Naive thymus-derived CD4-positive, alpha-beta T cell (primary cell): ENCODE measurements at regions of chr20 and their contacts with region 1.

Region 1: GRCh38 chr20:33674295-33675135 is at the start of gene NECAB3:
- DNase-seq: peak in 6 of 9 donors; percentile 27 to 83 (median 39)
- ATAC-seq: peak; percentile 89
- H3K4me3 ChIP-seq: peak within 1 kb of the TSS; percentile 58
- H3K4me3 Mint-ChIP-seq: peak within 1 kb of the TSS; percentile 85 to 95 (median 87)
- H3K27ac ChIP-seq: peak within 1 kb of the TSS; percentile 54
- H3K27ac Mint-ChIP-seq: peak within 1 kb of the TSS; percentile 33 to 90 (median 80)
- H3K4me1 ChIP-seq: peaks cover 15 to 38% of the 10 kb centered on the region in 2 donors
- H3K4me1 Mint-ChIP-seq: peaks cover 30 to 69% (median 47%) of the 10 kb centered on the region in 7 donors
- H3K27me3 ChIP-seq: no peaks in the 10 kb centered on the region
- H3K27me3 Mint-ChIP-seq: no peaks in the 10 kb centered on the region
- total RNA-seq, gene NECAB3: 10.8 to 46.8 (median 16.3) TPM

Region 2: DNA sequence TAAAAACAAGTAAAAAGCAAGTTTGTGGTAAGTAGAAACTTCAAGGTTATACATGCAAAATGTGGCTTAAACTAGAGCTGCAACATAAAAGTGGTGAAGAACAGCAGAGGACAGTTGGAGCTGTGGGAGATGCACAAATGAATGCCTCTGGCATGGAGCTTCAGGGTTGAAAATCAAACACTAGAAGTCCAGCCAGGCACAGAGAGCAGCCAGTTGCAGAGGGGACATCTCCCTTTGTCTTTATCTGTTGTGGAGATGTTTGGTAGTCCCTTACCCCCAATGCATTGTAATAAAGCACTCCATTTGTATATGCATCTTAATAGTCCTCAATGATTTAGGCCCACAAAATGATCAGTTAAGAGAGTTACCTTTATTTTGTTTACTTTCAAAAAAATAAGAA is 85.5 kb before region 1 on chr20:
- CTCF ChIA-PET with region 1: interaction called, 10 read pairs
- POLR2A ChIA-PET with region 1: interaction called, 3 read pairs
- intact Hi-C with region 1: no loop called
- DNase-seq: no peak
- ATAC-seq: no peak
- H3K4me3 ChIP-seq: no peak overlapping the region
- H3K4me3 Mint-ChIP-seq: no peak overlapping the region
- H3K27ac ChIP-seq: no peak overlapping the region
- H3K27ac Mint-ChIP-seq: peak overlapping the region in 1 of 9 donors; percentile 43
- H3K4me1 ChIP-seq: no peaks in the 10 kb centered on the region
- H3K4me1 Mint-ChIP-seq: peaks cover 0 to 11% (median 7%) of the 10 kb centered on the region in 7 donors
- H3K27me3 ChIP-seq: no peaks in the 10 kb centered on the region
- H3K27me3 Mint-ChIP-seq: no peaks in the 10 kb centered on the region

Region 3: GRCh38 chr20:33686100-33686983 is 11.8 kb after region 1 on chr20 and contains the start of gene E2F1:
- CTCF ChIA-PET with region 1: interaction called, 33 read pairs
- POLR2A ChIA-PET with region 1: interaction called, 75 read pairs
- intact Hi-C with region 1: loop called (anchors 1 kb)
- DNase-seq: peak; percentile 85 to 98 (median 90)
- ATAC-seq: peak; percentile 98
- H3K4me3 ChIP-seq: peak within 1 kb of the TSS; percentile 55
- H3K4me3 Mint-ChIP-seq: peak within 1 kb of the TSS; percentile 74 to 95 (median 84)
- H3K27ac ChIP-seq: peak within 1 kb of the TSS; percentile 59
- H3K27ac Mint-ChIP-seq: peak within 1 kb of the TSS; percentile 6 to 95 (median 84)
- H3K4me1 ChIP-seq: peaks cover 3 to 27% of the 10 kb centered on the region in 2 donors
- H3K4me1 Mint-ChIP-seq: peaks cover 11 to 72% (median 38%) of the 10 kb centered on the region in 7 donors
- H3K27me3 ChIP-seq: no peaks in the 10 kb centered on the region
- H3K27me3 Mint-ChIP-seq: no peaks in the 10 kb centered on the region
- total RNA-seq, gene E2F1: 0.98 to 61.6 (median 1.6) TPM